ENCODE measurements at regions of chr12 and their contacts with region 1.

Region 1: GRCh38 chr12:642633-643474 is 20.4 kb downstream of the NINJ2 start:
- DNase-seq: no peak
- ATAC-seq: no peak
- H3K4me3 ChIP-seq: no peak overlapping the region
- H3K27ac ChIP-seq: no peak overlapping the region
- H3K4me1 ChIP-seq: peaks cover 62% of the 10 kb centered on the region
- H3K27me3 ChIP-seq: no peaks in the 10 kb centered on the region
- CTCF ChIP-seq: no peak
- EP300 ChIP-seq: no peak
- POLR2A ChIP-seq: no peak
- RAD21 ChIP-seq: no peak

Region 2: DNA sequence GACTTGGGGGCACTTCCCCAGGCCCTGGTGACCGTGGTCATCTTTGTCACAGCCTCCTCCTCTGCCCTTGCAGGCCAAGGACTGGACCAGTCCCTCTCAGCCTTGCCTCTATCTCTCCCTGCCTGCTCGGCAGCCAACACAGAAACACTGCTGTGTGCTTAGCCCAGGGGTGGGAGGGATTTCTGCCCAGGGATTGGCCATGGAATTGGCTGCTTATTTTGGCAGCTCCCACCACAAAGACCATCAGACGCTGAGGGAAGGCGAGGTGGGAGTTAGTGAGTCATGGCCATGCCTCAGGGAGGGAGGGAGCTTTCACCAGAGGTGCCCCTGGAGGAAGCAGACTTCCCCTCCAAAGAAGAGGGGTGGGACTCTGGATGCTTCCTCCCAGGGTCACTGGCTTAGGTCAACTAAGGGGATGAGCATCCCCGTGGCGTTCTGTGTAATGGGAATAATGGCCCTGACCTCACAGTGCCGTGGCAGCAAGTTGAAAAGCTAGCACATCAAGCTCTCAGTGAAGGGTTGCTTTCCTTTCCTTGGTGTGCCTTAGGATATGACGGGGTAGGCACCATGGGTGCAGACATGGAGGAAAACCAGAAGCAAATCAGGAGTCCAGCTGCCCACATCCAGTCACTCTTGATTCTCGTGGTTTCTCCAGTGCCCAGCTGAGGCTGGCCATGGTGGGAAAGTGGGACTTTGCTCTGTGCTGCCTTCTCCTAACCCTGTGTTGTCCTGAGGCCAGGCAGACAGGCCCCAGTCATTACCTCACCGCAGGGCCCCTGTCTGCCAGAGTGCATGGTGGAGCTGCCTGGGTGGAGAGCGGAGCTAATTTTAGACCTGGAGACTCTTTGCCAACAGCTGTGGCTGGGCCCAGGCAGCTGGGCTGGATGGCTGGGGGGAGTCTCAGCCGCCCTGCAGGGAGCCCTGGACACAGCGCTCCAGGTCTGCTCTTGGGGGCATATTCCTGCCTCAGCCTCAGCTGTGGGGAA is 161.7 kb before region 1 on chr12:
- CTCF ChIA-PET with region 1: no interaction called
- POLR2A ChIA-PET with region 1: no interaction called
- in situ Hi-C with region 1: no loop called
- intact Hi-C with region 1: no loop called
- DNase-seq: peak; percentile 24
- ATAC-seq: peak; percentile 98
- H3K4me3 ChIP-seq: no peak overlapping the region
- H3K27ac ChIP-seq: no peak overlapping the region
- H3K4me1 ChIP-seq: peaks cover 14% of the 10 kb centered on the region
- H3K27me3 ChIP-seq: no peaks in the 10 kb centered on the region
- CTCF ChIP-seq: no peak
- EP300 ChIP-seq: no peak
- POLR2A ChIP-seq: no peak
- RAD21 ChIP-seq: no peak

Region 3: GRCh38 chr12:630656-631632 is 11.9 kb before region 1 on chr12:
- CTCF ChIA-PET with region 1: no interaction called
- POLR2A ChIA-PET with region 1: interaction called, 8 read pairs
- in situ Hi-C with region 1: no loop called
- intact Hi-C with region 1: loop called (anchors 2 kb)
- DNase-seq: no peak
- ATAC-seq: no peak
- H3K4me3 ChIP-seq: no peak overlapping the region
- H3K27ac ChIP-seq: peak overlapping the region; percentile 83
- H3K4me1 ChIP-seq: peaks cover 61% of the 10 kb centered on the region
- H3K27me3 ChIP-seq: no peaks in the 10 kb centered on the region; a peak in 1 of 5 replicates
- CTCF ChIP-seq: no peak
- EP300 ChIP-seq: no peak
- POLR2A ChIP-seq: no peak
- RAD21 ChIP-seq: no peak

Region 4: DNA sequence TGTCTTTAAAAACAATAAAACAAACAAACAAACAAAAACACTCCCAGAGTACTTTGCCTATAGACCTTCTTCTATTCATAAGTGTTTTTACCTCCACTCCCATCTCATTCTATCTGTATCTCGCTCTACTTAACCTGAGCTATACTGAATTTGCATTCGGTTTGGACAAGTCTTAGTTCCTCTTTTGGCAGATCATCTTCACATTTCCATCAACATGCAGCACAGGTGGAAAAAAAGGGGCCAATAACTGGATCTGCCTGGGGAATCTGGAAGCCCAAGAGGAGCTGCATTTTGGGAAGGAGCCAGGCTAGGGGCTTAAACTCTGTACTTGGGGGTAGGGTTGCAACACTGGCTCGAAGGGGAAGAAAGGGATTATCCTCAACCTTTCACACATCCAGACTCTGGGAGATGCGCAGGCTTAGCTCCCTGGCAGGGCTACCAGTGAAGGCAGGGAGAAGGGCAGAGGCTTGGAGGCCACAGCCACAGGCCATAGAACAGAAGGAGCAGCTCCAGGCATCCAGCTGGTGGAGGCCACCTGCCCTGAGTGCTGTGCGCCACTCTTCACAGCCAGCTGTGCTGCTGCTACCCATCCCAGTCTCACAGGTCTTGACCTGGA is 16.3 kb after region 1 on chr12:
- CTCF ChIA-PET with region 1: no interaction called
- POLR2A ChIA-PET with region 1: no interaction called
- in situ Hi-C with region 1: no loop called
- intact Hi-C with region 1: no loop called
- DNase-seq: no peak
- ATAC-seq: no peak
- H3K4me3 ChIP-seq: no peak overlapping the region
- H3K27ac ChIP-seq: no peak overlapping the region
- H3K4me1 ChIP-seq: peaks cover 29% of the 10 kb centered on the region
- H3K27me3 ChIP-seq: peaks cover 0 to 18% of the 10 kb centered on the region in 2 experiments; a peak in 4 of 5 replicates
- CTCF ChIP-seq: no peak
- EP300 ChIP-seq: no peak
- POLR2A ChIP-seq: no peak
- RAD21 ChIP-seq: no peak

Region 5: DNA sequence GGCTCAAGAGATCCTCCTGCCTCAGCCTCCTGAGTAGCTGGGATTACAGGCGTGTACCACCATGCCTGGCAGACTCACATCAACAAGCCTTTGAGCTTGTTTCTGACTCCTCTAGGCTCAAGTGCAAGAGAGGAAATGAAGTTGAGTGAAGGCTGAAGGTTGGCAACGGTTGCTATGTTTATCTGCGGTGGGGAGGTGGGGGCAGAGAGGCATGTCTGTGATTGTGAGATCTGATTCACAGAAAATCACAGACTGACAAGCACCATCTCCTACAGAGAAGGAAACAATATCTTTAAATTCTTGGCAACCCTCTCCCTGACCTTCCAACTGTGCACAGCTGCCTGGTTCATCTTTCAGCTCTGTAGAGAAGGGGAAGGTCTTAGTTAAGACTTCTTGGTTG is 42.5 kb after region 1 on chr12:
- CTCF ChIA-PET with region 1: no interaction called
- POLR2A ChIA-PET with region 1: no interaction called
- in situ Hi-C with region 1: no loop called
- intact Hi-C with region 1: no loop called
- DNase-seq: no peak
- ATAC-seq: no peak
- H3K4me3 ChIP-seq: no peak overlapping the region
- H3K27ac ChIP-seq: no peak overlapping the region
- H3K4me1 ChIP-seq: peaks cover 5% of the 10 kb centered on the region; the same call in 1 of the 2 replicates
- H3K27me3 ChIP-seq: 0 out of 5 replicates have a peak, but pooled peaks cover 0 to 7% of the 10 kb centered on the region in 2 experiments
- CTCF ChIP-seq: no peak
- EP300 ChIP-seq: no peak
- POLR2A ChIP-seq: no peak
- RAD21 ChIP-seq: no peak

Measured in HepG2 (cell line).